Colonic mucosa (tissue), 4 donors: ENCODE measurements at regions of chr6 and their contacts with region 1.

Region 1: DNA sequence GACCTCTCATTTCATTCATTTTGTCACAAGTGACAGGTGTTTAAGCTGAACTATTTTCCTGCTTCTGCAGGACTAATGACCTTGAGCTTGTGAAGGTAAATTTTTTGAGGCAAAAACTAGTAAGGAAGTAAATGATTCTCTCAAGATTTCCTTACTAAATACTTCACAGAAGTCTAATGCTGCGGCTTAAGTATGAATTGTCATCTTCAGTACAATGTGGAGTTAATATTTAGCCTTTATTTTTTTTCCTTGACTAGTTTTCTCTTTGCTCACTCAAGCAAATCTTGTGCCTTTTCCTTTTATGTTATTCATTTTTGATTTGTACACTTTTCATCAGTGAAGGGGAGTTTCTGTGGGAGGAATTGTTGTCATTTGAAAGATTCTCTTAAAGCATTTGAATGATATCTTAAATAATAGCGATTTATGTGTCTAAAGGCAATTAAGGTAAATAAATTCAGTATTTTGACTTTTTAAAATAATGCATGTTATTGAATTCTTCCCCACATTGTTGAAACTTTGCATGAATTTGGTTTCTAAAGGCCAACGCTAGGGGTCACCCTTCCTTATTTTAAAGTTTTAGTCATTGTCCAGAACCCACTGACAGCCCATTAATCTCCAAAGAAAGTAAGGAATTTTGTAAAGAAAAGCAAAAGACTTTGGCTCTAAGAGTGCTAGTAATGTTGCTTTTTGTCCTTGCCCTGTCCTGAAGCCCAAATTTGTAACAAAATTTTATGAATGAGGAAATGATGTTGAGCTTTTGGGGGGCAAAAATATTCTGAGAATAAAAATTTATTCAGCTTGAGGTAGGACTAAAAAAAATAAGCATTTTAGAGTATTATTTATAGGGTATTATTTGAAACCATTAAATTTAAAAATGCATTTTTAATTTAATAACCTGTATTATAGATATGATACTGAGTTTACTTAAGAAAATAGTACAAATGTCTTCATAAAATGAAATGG is 157.4 kb upstream of the LAMA2 start:
- DNase-seq: no peak
- H3K4me3 ChIP-seq: no peak overlapping the region
- H3K27ac ChIP-seq: no peak overlapping the region
- H3K4me1 ChIP-seq: no peaks in the 10 kb centered on the region
- H3K27me3 ChIP-seq: no peaks in the 10 kb centered on the region
- CTCF ChIP-seq: peak; percentile 47

Region 2: DNA sequence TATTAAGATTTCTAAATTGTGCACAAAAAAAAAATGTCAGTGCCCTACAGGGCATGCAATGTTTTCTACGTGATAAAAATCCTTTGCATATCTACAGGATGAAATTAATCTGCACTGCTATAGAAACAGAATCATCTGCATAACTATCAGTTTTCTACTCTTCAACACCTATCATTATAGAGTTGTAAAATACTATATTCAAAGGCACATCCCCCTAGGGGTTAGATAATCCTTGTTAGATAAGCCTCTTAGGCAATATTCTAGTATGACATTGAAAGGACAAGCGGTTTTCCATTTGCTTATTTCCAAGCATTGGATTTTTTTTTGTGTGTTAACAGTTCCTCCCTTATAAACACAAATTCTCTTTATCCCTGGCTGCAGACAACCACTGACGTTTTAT is 58.7 kb after region 1 on chr6:
- intact Hi-C with region 1: no loop called
- DNase-seq: no peak
- H3K4me3 ChIP-seq: no peak overlapping the region
- H3K27ac ChIP-seq: no peak overlapping the region
- H3K4me1 ChIP-seq: no peaks in the 10 kb centered on the region
- H3K27me3 ChIP-seq: no peaks in the 10 kb centered on the region
- CTCF ChIP-seq: no peak

Region 3: DNA sequence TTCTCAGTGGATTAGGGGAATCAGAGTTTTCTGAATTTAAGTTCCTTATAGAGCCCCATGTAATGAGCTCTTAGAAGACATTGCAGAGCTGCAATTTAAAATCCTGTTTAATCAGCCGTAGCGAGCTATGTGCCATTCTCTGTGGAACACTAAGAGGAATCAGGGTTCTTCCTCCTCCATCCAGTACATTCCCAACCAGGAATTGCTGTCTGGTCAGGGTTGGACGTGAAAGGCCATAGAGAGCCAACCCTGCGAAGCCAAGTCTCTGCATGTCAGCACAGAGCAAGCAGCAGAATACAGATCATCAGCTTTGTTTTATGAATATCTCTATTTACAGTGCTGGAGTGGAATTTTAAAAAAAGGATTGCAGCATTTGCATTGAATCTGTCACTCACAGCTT is 523.4 kb after region 1 on chr6:
- intact Hi-C with region 1: loop called (anchors 10 kb)
- DNase-seq: no peak
- H3K4me3 ChIP-seq: no peak overlapping the region
- H3K27ac ChIP-seq: no peak overlapping the region
- H3K4me1 ChIP-seq: peaks cover 5% of the 10 kb centered on the region
- H3K27me3 ChIP-seq: no peaks in the 10 kb centered on the region
- CTCF ChIP-seq: no peak